CD8-positive, alpha-beta T cell (primary cell): ENCODE measurements at regions of chr15 and their contacts with region 1.

Region 1: DNA sequence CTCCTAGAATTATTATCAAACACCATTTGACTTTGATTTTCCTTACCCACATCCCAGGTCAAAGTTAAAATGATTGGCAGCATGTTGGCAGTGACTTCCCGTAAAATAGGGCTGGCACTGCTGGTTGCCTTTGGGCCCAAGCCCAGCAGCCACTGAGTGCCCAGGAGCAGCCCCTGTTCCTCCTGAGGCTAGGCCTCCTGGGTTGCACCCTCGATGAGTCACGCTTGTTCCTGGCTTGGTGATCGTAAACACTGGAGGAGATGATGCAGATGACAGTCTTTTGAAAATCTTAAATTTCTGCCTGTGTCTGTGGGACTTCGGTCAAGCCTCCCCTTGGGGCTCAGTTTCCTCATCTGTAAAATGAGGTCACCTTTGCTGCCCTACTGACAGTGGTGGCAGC is 290.0 kb downstream of the TLE3 start:
- DNase-seq: no peak
- ATAC-seq: no peak
- H3K4me3 ChIP-seq: no peak overlapping the region
- H3K4me3 Mint-ChIP-seq: no peak overlapping the region
- H3K27ac ChIP-seq: no peak overlapping the region
- H3K27ac Mint-ChIP-seq: no peak overlapping the region
- H3K4me1 ChIP-seq: peaks cover 8% of the 10 kb centered on the region
- H3K4me1 Mint-ChIP-seq: peaks cover 12% of the 10 kb centered on the region
- H3K27me3 ChIP-seq: no peaks in the 10 kb centered on the region
- H3K27me3 Mint-ChIP-seq: peaks cover 16% of the 10 kb centered on the region
- CTCF ChIP-seq: no peak

Region 2: DNA sequence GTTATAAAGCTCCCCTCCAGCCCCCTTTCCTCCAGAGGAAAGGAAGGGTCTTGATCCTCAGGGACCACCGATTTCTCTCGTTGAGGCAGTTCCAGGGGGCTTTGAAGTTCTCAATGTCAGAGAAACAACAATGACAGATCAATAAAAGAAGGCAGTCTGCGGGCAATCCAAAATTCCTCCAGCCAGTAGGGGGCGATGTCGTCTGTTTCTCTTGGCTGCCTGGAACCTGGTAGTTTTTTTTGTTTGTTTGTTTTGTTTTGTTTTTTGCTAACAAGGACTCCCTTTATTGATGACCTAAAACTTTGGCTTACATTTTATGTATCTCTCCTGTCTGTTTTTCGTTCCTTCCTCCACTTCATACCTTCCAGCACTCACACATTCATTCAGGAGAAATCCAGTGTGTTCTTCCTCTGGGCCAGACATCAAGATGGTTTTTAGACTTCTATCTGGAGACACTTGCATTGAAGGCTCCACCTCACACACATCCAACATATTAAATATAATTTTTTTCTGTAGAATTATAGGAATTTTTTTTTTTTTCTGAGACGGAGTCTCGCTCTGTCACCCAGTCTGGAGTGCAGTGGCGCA is 78.5 kb before region 1 on chr15:
- CTCF ChIA-PET with region 1: no interaction called
- POLR2A ChIA-PET with region 1: no interaction called
- intact Hi-C with region 1: loop called in 1 of 2 experiments (anchors 5 kb)
- DNase-seq: peak; percentile 56 to 86 (median 79)
- ATAC-seq: peak; percentile 62
- H3K4me3 ChIP-seq: no peak overlapping the region
- H3K4me3 Mint-ChIP-seq: no peak overlapping the region
- H3K27ac ChIP-seq: no peak overlapping the region
- H3K27ac Mint-ChIP-seq: no peak overlapping the region
- H3K4me1 ChIP-seq: peaks cover 12% of the 10 kb centered on the region
- H3K4me1 Mint-ChIP-seq: peaks cover 20% of the 10 kb centered on the region
- H3K27me3 ChIP-seq: peaks cover 0 to 4% of the 10 kb centered on the region in 2 experiments
- H3K27me3 Mint-ChIP-seq: no peaks in the 10 kb centered on the region
- CTCF ChIP-seq: peak; percentile 81